Heart right ventricle (tissue), 16 donors: ENCODE measurements at regions of chr2 and their contacts with region 1.

Region 1: DNA sequence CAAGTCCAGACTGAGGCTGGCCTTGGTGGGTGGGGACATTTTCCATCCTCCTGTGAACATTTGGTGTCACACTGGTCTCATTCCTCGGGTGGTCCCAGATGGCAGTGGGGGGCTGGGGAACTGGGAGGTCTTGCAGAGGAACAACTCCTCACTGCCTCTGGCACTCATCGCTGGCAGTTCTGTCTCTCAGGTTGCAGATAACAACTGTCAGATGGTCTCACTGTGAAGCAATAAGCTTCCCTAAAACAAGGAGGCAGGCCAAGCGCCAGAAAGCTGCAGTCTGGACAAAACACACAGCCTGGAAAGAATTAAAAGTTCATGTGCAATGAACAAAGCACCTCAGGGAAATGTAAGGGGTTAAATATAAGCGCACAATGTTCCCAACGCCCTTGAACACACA is 78.1 kb downstream of the IRS1 start:
- DNase-seq: peak; percentile 41
- ATAC-seq: peak in 1 of 8 donors; percentile 6
- H3K4me3 ChIP-seq: no peak overlapping the region
- H3K27ac ChIP-seq: no peak overlapping the region
- H3K4me1 ChIP-seq: peaks cover 3 to 34% (median 26%) of the 10 kb centered on the region in 9 donors
- H3K27me3 ChIP-seq: no peaks in the 10 kb centered on the region
- CTCF ChIP-seq: no peak

Region 2: GRCh38 chr2:226215902-226216503 is 505.5 kb before region 1 on chr2:
- intact Hi-C with region 1: loop called in 2 of 10 experiments (anchors 10 kb)
- DNase-seq: peak in 1 of 2 donors; percentile 53
- ATAC-seq: peak in 6 of 8 donors; percentile 72 to 86 (median 76)
- H3K4me3 ChIP-seq: no peak overlapping the region
- H3K27ac ChIP-seq: no peak overlapping the region
- H3K4me1 ChIP-seq: peaks cover 0 to 17% (median 10%) of the 10 kb centered on the region in 9 donors
- H3K27me3 ChIP-seq: no peaks in the 10 kb centered on the region
- CTCF ChIP-seq: peak in 8 of 9 donors; percentile 32 to 77 (median 68)

Region 3: DNA sequence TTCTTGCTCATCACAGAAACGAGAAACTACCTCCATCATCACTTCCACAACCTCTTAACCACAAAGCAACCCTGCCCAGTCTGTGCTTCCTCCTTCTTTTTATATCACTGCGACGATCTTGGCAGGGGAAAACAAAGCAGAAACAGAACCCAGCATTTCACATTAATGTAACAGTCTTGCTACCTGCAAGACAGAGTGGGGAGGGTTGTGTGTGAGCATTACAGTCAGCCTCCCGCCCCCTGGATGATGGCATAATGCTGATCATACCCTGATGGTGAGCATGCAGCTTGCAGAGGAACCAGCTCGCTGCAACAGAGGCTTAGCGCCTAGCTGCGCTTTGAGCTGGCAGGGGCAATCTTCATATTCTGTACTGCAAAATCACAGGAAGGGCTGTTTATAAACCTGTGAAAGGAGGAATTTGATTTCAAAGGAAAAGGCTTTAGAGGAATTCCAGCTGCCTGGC is 298.0 kb before region 1 on chr2:
- intact Hi-C with region 1: no loop called
- DNase-seq: peak in 1 of 2 donors; percentile 12
- ATAC-seq: peak in 1 of 8 donors; percentile 22
- H3K4me3 ChIP-seq: no peak overlapping the region
- H3K27ac ChIP-seq: no peak overlapping the region
- H3K4me1 ChIP-seq: peaks cover 0 to 15% (median 0%) of the 10 kb centered on the region in 9 donors
- H3K27me3 ChIP-seq: no peaks in the 10 kb centered on the region
- CTCF ChIP-seq: no peak